ENCODE measurements at regions of chr5 and their contacts with region 1.

Region 1: GRCh38 chr5:170633235-170634081 is 129.6 kb downstream of the KCNIP1 start:
- DNase-seq: peak; percentile 11
- H3K4me3 Mint-ChIP-seq: peak overlapping the region; percentile 57
- H3K27ac Mint-ChIP-seq: no peak overlapping the region
- H3K4me1 Mint-ChIP-seq: peaks cover 16% of the 10 kb centered on the region
- H3K27me3 Mint-ChIP-seq: no peaks in the 10 kb centered on the region

Region 2: GRCh38 chr5:170100066-170100943 is 533.2 kb before region 1 on chr5:
- CTCF ChIA-PET with region 1: no interaction called
- intact Hi-C with region 1: loop called (anchors 5 kb)
- DNase-seq: peak; percentile 88
- H3K4me3 Mint-ChIP-seq: no peak overlapping the region
- H3K27ac Mint-ChIP-seq: no peak overlapping the region
- H3K4me1 Mint-ChIP-seq: no peaks in the 10 kb centered on the region
- H3K27me3 Mint-ChIP-seq: peaks cover 2% of the 10 kb centered on the region

Region 3: GRCh38 chr5:170225326-170226128 is 407.9 kb before region 1 on chr5:
- CTCF ChIA-PET with region 1: interaction called, 3 read pairs
- intact Hi-C with region 1: loop called (anchors 5 kb)
- DNase-seq: peak; percentile 91
- H3K4me3 Mint-ChIP-seq: no peak overlapping the region
- H3K27ac Mint-ChIP-seq: no peak overlapping the region
- H3K4me1 Mint-ChIP-seq: peaks cover 7% of the 10 kb centered on the region
- H3K27me3 Mint-ChIP-seq: no peaks in the 10 kb centered on the region

Region 4: GRCh38 chr5:170312666-170313065 is 320.8 kb before region 1 on chr5:
- CTCF ChIA-PET with region 1: no interaction called
- intact Hi-C with region 1: no loop called
- DNase-seq: peak; percentile 90
- H3K4me3 Mint-ChIP-seq: peak overlapping the region; percentile 90
- H3K27ac Mint-ChIP-seq: peak overlapping the region; percentile 94
- H3K4me1 Mint-ChIP-seq: peaks cover 68% of the 10 kb centered on the region
- H3K27me3 Mint-ChIP-seq: no peaks in the 10 kb centered on the region

Region 5: GRCh38 chr5:170426149-170426767 is 207.2 kb before region 1 on chr5:
- CTCF ChIA-PET with region 1: interaction called, 110 read pairs
- intact Hi-C with region 1: no loop called
- DNase-seq: no peak
- H3K4me3 Mint-ChIP-seq: no peak overlapping the region
- H3K27ac Mint-ChIP-seq: no peak overlapping the region
- H3K4me1 Mint-ChIP-seq: no peaks in the 10 kb centered on the region
- H3K27me3 Mint-ChIP-seq: peaks cover 3% of the 10 kb centered on the region

Region 6: GRCh38 chr5:170434966-170435605 is 198.4 kb before region 1 on chr5:
- CTCF ChIA-PET with region 1: interaction called, 110 read pairs
- intact Hi-C with region 1: loop called (anchors 1 kb)
- DNase-seq: peak; percentile 69
- H3K4me3 Mint-ChIP-seq: no peak overlapping the region
- H3K27ac Mint-ChIP-seq: no peak overlapping the region
- H3K4me1 Mint-ChIP-seq: no peaks in the 10 kb centered on the region
- H3K27me3 Mint-ChIP-seq: no peaks in the 10 kb centered on the region

Region 7: DNA sequence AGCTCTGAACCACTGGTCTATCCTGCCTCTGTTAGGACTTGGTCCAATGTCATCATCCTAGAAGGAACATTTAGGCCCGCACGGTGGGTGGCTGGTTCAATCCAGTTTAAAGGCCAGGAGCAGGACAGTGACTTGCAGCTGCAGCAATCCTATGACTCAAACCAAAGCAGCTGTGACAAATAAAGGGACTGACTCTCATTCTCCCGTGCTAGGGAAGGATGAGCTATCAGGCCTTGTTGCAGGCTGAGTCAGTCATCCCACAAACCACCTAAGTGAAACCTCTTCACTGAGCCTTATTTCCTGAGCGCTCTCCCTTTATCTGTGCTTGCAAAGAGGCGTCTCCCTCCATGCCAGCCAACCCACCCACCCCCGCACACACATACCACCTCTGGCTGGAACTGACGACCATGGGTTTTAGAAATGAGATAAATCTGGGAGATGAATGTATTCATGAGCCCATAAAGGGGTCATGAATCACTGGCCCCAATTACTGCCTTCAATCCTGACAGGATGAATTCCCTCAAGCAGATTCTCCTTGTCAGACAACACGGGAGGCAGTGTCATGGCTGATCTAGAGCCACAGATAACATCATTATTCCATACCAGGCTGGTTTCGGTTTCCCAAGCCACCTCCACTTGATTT is 36.2 kb before region 1 on chr5:
- CTCF ChIA-PET with region 1: interaction called, 34 read pairs
- intact Hi-C with region 1: no loop called
- DNase-seq: peak; percentile 61
- H3K4me3 Mint-ChIP-seq: no peak overlapping the region
- H3K27ac Mint-ChIP-seq: no peak overlapping the region
- H3K4me1 Mint-ChIP-seq: peaks cover 21% of the 10 kb centered on the region
- H3K27me3 Mint-ChIP-seq: peaks cover 30% of the 10 kb centered on the region

Region 8: DNA sequence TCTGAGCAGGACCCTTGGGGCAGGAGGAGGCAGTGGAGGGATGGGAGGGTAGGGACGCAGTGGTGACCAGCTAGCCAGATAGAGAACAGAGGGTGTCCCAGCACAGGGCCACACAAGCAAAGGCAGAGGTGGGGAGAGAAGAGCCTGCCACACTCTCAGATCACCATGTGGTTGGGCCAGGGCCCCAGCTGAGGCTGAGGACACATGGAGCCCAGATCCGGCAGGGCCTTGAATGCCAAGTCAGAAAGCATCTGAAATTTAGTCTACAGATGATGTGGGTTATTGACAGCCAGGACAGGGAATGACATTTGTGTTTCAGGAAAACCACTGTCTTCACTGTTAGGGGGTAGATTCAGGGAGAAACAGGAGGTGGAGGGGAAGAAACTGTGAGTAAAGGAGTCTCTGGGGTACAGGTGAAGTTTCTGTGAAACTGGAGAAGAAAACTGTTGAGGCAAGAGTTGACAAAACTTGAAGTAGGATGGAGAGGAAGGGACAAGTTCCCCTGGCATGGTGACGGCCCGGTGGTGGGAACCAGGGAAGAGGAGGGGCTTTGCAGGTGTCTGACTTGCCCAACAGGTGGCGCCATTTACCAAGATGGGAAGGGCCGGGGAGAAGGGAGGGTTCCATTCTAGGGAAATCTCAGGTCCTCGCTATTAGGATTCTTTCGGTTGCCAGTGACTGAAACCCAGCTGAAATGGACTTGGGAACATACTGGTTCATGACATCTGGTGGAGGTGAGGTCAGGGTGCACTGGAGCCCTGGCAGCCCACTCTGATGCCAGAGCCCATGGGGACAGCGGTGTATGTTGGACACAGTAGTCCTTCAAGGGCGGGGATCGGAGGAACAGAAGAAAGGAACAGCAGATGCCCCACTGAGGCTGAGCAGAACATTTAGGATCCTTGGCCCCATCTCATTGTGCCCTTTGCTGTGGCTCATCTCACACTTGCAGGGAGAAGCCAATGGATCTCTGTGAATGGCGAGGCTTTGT is 29.6 kb before region 1 on chr5:
- CTCF ChIA-PET with region 1: interaction called, 34 read pairs
- intact Hi-C with region 1: loop called (anchors 1 kb)
- DNase-seq: peak; percentile 76
- H3K4me3 Mint-ChIP-seq: no peak overlapping the region
- H3K27ac Mint-ChIP-seq: no peak overlapping the region
- H3K4me1 Mint-ChIP-seq: peaks cover under 1% of the 10 kb centered on the region
- H3K27me3 Mint-ChIP-seq: peaks cover 25% of the 10 kb centered on the region